Caco-2 (cell line): ENCODE measurements at regions of chr14 and their contacts with region 1.

Region 1: DNA sequence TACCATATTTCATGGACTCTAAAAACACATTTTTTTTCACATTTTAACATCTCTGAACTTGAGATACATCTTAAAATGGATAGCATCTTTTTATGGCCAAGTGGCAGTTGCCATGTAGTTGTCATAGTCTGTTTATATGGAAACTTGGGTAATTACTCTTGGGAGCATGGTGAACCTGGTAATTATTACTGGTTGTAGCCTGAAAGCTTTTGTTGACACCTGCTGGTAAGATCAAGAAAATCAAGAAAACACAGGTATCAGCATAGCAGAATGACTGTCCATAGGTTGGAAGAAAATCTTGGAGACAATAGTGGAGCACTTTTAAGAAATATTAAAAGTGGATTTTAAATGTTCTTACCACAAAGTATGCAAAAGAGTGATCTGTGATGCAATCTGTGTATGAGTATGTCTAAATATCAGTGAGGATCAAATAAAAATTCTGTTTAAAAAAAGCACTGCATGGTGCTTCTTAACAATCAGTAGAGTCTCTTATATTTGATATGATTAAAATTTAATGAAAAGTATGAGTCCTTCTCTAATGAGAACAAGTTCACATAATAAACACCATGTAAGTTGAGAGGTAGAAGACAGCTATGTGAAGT is 44.2 kb downstream of the TTC8 start:
- DNase-seq: peak in 1 of 2 experiments; percentile 15
- H3K4me3 ChIP-seq: no peak overlapping the region
- H3K4me3 Mint-ChIP-seq: no peak overlapping the region
- H3K27ac Mint-ChIP-seq: no peak overlapping the region
- H3K4me1 ChIP-seq: no peaks in the 10 kb centered on the region
- H3K4me1 Mint-ChIP-seq: no peaks in the 10 kb centered on the region
- H3K27me3 ChIP-seq: no peaks in the 10 kb centered on the region
- H3K27me3 Mint-ChIP-seq: no peaks in the 10 kb centered on the region
- CTCF ChIP-seq: peak; percentile 34 to 40

Region 2: GRCh38 chr14:88667555-88668273 is 200.9 kb before region 1 on chr14:
- CTCF ChIA-PET with region 1: interaction called, 6 read pairs
- POLR2A ChIA-PET with region 1: no interaction called
- intact Hi-C with region 1: loop called (anchors 1 kb)
- DNase-seq: peak; percentile 59 to 72
- H3K4me3 ChIP-seq: no peak overlapping the region
- H3K4me3 Mint-ChIP-seq: no peak overlapping the region
- H3K27ac Mint-ChIP-seq: no peak overlapping the region
- H3K4me1 ChIP-seq: no peaks in the 10 kb centered on the region
- H3K4me1 Mint-ChIP-seq: no peaks in the 10 kb centered on the region
- H3K27me3 ChIP-seq: no peaks in the 10 kb centered on the region
- H3K27me3 Mint-ChIP-seq: peaks cover 17% of the 10 kb centered on the region
- CTCF ChIP-seq: peak; percentile 81 to 89

Region 3: GRCh38 chr14:88729159-88729558 is 139.5 kb before region 1 on chr14:
- CTCF ChIA-PET with region 1: no interaction called
- POLR2A ChIA-PET with region 1: no interaction called
- intact Hi-C with region 1: loop called (anchors 5 kb)
- DNase-seq: no peak
- H3K4me3 ChIP-seq: no peak overlapping the region
- H3K4me3 Mint-ChIP-seq: no peak overlapping the region
- H3K27ac Mint-ChIP-seq: no peak overlapping the region
- H3K4me1 ChIP-seq: no peaks in the 10 kb centered on the region
- H3K4me1 Mint-ChIP-seq: no peaks in the 10 kb centered on the region
- H3K27me3 ChIP-seq: no peaks in the 10 kb centered on the region; the same call in 1 of the 2 replicates
- H3K27me3 Mint-ChIP-seq: no peaks in the 10 kb centered on the region
- CTCF ChIP-seq: peak; percentile 25 to 45

Region 4: GRCh38 chr14:88792572-88793258 is 75.9 kb before region 1 on chr14 and contains the start of gene EML5:
- CTCF ChIA-PET with region 1: no interaction called
- POLR2A ChIA-PET with region 1: no interaction called
- intact Hi-C with region 1: loop called (anchors 2 kb)
- DNase-seq: peak; percentile 78 to 91
- H3K4me3 ChIP-seq: peak within 1 kb of the TSS; percentile 60
- H3K4me3 Mint-ChIP-seq: peak within 1 kb of the TSS; percentile 67
- H3K27ac Mint-ChIP-seq: no peak within 1 kb of the TSS
- H3K4me1 ChIP-seq: no peaks in the 10 kb centered on the region
- H3K4me1 Mint-ChIP-seq: no peaks in the 10 kb centered on the region
- H3K27me3 ChIP-seq: no peaks in the 10 kb centered on the region
- H3K27me3 Mint-ChIP-seq: peaks cover 4% of the 10 kb centered on the region
- CTCF ChIP-seq: peak; percentile 3 to 37
- total RNA-seq, gene EML5: 0.11 and 0.28 TPM in 2 replicates